ENCODE measurements at regions of chr17 and their contacts with region 1.

Region 1: GRCh38 chr17:64281962-64282727 is 19.1 kb upstream of the TEX2 start:
- DNase-seq: peak; percentile 72
- CTCF ChIP-seq: peak; percentile 75

Region 2: DNA sequence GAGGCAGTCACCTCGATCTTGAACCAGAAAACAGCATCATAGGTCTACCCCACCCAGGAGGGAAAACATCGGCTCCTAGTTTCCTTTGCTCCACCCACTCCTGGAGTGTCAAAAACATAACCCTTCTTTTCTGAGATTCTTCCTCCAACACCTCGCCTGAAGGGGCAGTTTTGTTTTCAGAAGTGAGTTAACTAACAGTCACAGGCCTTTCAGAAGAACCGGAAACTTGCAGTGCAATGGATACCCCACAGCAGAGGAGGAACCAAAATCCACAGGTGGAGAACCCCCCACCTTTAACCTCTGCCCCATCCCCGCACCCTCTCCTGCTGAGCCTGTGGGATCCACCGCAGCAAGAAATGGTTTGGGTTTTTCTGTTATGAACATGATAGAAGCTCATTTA is 11.3 kb before region 1 on chr17:
- CTCF ChIA-PET with region 1: interaction called, 24 read pairs
- POLR2A ChIA-PET with region 1: no interaction called
- DNase-seq: peak; percentile 50
- CTCF ChIP-seq: no peak

Region 3: DNA sequence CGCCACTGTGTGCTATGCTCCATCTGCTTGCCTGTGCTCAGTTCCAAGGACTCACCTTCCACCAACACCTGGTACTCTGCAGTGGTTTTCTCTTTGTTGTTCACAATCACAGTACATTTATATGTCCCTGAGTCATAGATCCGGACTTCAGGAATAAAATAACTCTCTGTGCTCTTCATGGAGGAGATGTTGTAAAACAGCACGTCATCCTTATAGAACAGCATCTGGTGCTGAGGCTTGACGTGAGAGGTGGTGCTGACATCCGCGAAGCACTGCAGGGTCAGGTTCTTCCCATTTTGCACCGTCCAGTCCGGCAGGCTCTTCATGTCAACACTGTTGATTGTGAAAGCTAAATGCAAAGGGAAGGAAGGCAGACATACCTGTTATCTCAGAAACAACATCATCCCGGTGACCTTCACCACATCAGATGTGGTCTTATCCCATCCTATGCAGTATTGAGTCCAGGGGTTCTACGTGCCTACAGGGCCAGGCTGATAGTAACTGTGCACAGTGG is 95.7 kb after region 1 on chr17:
- CTCF ChIA-PET with region 1: no interaction called
- POLR2A ChIA-PET with region 1: no interaction called
- DNase-seq: no peak
- CTCF ChIP-seq: no peak